Naive thymus-derived CD4-positive, alpha-beta T cell (primary cell): ENCODE measurements at regions of chrX and their contacts with region 1.

Region 1: DNA sequence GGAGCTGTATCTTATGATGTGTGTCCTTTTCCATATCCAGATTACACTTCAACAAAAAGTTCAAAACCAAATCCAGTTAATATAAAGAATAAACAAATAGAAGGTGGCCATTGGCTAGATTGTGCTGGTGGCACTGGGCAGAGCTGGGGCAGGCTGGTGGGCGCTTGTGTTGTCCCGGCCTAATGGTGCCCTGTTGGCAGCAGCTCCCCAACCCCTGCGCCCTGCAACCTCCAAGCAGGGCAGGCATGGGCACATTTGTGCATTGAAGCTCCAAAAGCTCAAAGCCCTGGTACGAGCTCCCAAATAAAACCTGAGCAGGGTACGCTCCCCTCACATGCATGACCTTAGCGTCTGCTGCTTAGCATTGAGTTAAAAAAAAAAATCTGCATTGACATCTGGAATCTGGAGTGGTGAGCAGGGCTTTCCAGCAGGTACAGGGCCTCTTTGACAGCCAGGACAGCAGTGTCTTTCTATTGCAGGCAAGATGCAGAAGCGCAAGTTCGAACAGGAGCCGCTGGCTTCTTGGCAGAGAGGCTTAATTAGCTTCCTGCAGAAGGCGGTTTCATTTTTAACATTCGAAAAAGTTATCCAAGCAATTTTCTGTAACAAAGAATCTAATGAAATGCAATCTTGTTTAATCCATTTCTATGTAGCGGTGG is 25.9 kb upstream of the NYX start:
- DNase-seq: no peak
- ATAC-seq: no peak
- H3K4me3 ChIP-seq: peak overlapping the region; percentile 20
- H3K4me3 Mint-ChIP-seq: peak overlapping the region; percentile 42 to 84 (median 70)
- H3K27ac ChIP-seq: no peak overlapping the region
- H3K27ac Mint-ChIP-seq: peak overlapping the region in 3 of 9 donors; percentile 25 to 62 (median 52)
- H3K4me1 ChIP-seq: no peaks in the 10 kb centered on the region
- H3K4me1 Mint-ChIP-seq: peaks cover 0 to 14% (median 4%) of the 10 kb centered on the region in 7 donors
- H3K27me3 ChIP-seq: no peaks in the 10 kb centered on the region
- H3K27me3 Mint-ChIP-seq: peaks cover 0 to 5% (median 0%) of the 10 kb centered on the region in 5 donors

Region 2: DNA sequence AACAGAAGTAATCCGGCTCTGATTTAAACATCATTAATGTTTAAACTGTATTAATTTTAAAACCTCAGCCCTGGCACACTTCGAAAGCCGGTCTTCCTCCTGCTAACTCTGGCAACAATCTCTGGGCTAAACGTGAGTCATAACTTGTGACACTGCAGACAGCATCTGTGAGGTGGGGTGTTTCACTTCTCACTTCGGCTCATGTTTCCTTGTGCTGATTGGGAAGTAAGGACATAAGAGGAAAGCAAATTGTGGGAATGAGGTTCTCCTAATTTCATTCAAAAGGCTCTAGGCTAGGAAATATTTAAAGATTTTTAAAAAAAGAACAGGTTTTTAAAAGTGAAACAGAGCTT is 475.9 kb before region 1 on chrX:
- CTCF ChIA-PET with region 1: no interaction called
- POLR2A ChIA-PET with region 1: no interaction called
- intact Hi-C with region 1: no loop called
- DNase-seq: no peak
- ATAC-seq: peak; percentile 48
- H3K4me3 ChIP-seq: no peak overlapping the region
- H3K4me3 Mint-ChIP-seq: no peak overlapping the region
- H3K27ac ChIP-seq: no peak overlapping the region
- H3K27ac Mint-ChIP-seq: no peak overlapping the region
- H3K4me1 ChIP-seq: no peaks in the 10 kb centered on the region
- H3K4me1 Mint-ChIP-seq: peaks cover 0 to 3% (median 0%) of the 10 kb centered on the region in 7 donors
- H3K27me3 ChIP-seq: no peaks in the 10 kb centered on the region
- H3K27me3 Mint-ChIP-seq: no peaks in the 10 kb centered on the region

Region 3: DNA sequence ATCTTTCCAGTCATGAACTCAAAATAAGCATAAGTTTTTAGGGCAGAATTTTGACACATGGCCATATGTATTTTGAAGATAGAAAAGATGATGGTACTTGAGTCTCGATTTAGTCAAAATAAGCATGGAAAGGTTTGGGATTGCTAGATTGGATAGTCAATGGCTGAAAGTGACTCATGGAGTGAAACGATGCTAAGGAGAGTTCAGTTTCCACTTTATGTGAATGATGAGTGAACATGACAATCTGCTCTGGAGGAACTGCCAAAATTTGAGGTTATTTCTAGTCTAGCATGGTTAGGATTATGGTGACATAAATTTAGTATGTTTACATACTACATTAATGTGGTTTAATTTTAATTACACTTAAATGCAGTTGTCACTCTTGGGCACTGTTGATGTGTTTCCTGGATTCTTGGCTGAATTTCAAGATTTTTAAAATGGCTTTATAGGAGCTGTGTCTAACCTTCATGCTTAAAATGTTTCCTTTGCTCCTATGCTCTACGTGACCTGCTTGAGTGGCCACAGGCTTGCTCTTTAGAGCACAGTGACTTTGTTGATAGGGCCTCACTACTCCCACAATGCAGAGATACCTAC is 70.1 kb before region 1 on chrX:
- CTCF ChIA-PET with region 1: no interaction called
- POLR2A ChIA-PET with region 1: interaction called, 3 read pairs
- intact Hi-C with region 1: loop called in 1 of 2 experiments (anchors 5 kb)
- DNase-seq: no peak
- ATAC-seq: peak; percentile 45
- H3K4me3 ChIP-seq: no peak overlapping the region
- H3K4me3 Mint-ChIP-seq: peak overlapping the region in 3 of 10 donors; percentile 2 to 11 (median 8)
- H3K27ac ChIP-seq: no peak overlapping the region
- H3K27ac Mint-ChIP-seq: peak overlapping the region in 8 of 9 donors; percentile 44 to 93 (median 74)
- H3K4me1 ChIP-seq: peaks cover 0 to 11% of the 10 kb centered on the region in 2 donors
- H3K4me1 Mint-ChIP-seq: peaks cover 5 to 56% (median 37%) of the 10 kb centered on the region in 7 donors
- H3K27me3 ChIP-seq: no peaks in the 10 kb centered on the region
- H3K27me3 Mint-ChIP-seq: no peaks in the 10 kb centered on the region

Region 4: GRCh38 chrX:41384041-41384705 is 37.0 kb before region 1 on chrX:
- CTCF ChIA-PET with region 1: no interaction called
- POLR2A ChIA-PET with region 1: interaction called, 3 read pairs
- intact Hi-C with region 1: loop called in 1 of 2 experiments (anchors 5 kb)
- DNase-seq: peak; percentile 4 to 58 (median 26)
- ATAC-seq: peak; percentile 79
- H3K4me3 ChIP-seq: no peak overlapping the region
- H3K4me3 Mint-ChIP-seq: peak overlapping the region in 5 of 10 donors; percentile 18 to 87 (median 79)
- H3K27ac ChIP-seq: no peak overlapping the region
- H3K27ac Mint-ChIP-seq: peak overlapping the region in 5 of 9 donors; percentile 36 to 98 (median 87)
- H3K4me1 ChIP-seq: peaks cover 0 to 5% of the 10 kb centered on the region in 2 donors
- H3K4me1 Mint-ChIP-seq: peaks cover 0 to 21% (median 15%) of the 10 kb centered on the region in 7 donors
- H3K27me3 ChIP-seq: no peaks in the 10 kb centered on the region
- H3K27me3 Mint-ChIP-seq: no peaks in the 10 kb centered on the region

Region 5: GRCh38 chrX:42184313-42185040 is 763.3 kb after region 1 on chrX:
- CTCF ChIA-PET with region 1: no interaction called
- POLR2A ChIA-PET with region 1: no interaction called
- intact Hi-C with region 1: no loop called
- DNase-seq: no peak
- ATAC-seq: no peak
- H3K4me3 ChIP-seq: no peak overlapping the region
- H3K4me3 Mint-ChIP-seq: no peak overlapping the region
- H3K27ac ChIP-seq: no peak overlapping the region
- H3K27ac Mint-ChIP-seq: no peak overlapping the region
- H3K4me1 ChIP-seq: no peaks in the 10 kb centered on the region
- H3K4me1 Mint-ChIP-seq: no peaks in the 10 kb centered on the region
- H3K27me3 ChIP-seq: no peaks in the 10 kb centered on the region
- H3K27me3 Mint-ChIP-seq: no peaks in the 10 kb centered on the region

Region 6: GRCh38 chrX:42195511-42195910 is 774.3 kb after region 1 on chrX:
- CTCF ChIA-PET with region 1: no interaction called
- POLR2A ChIA-PET with region 1: no interaction called
- intact Hi-C with region 1: no loop called
- DNase-seq: no peak
- ATAC-seq: no peak
- H3K4me3 ChIP-seq: no peak overlapping the region
- H3K4me3 Mint-ChIP-seq: no peak overlapping the region
- H3K27ac ChIP-seq: no peak overlapping the region
- H3K27ac Mint-ChIP-seq: no peak overlapping the region
- H3K4me1 ChIP-seq: no peaks in the 10 kb centered on the region
- H3K4me1 Mint-ChIP-seq: peaks cover 0 to 1% (median 0%) of the 10 kb centered on the region in 7 donors
- H3K27me3 ChIP-seq: no peaks in the 10 kb centered on the region
- H3K27me3 Mint-ChIP-seq: no peaks in the 10 kb centered on the region